ENCODE measurements at regions of chr13 and their contacts with region 1.

Region 1: GRCh38 chr13:98890186-98890585 is 87.7 kb downstream of the DOCK9 start:
- DNase-seq: no peak
- ATAC-seq: peak; percentile 44 to 90 (median 69)
- H3K4me3 ChIP-seq: no peak overlapping the region
- H3K27ac ChIP-seq: no peak overlapping the region
- H3K4me1 ChIP-seq: peaks cover 0 to 49% (median 22%) of the 10 kb centered on the region in 9 donors
- H3K27me3 ChIP-seq: no peaks in the 10 kb centered on the region
- CTCF ChIP-seq: no peak

Region 2: GRCh38 chr13:98977568-98978265 is 87.5 kb after region 1 on chr13 and contains the start of gene DOCK9:
- intact Hi-C with region 1: loop called in 1 of 10 experiments (anchors 10 kb)
- DNase-seq: peak; percentile 73 to 77
- ATAC-seq: peak; percentile 87 to 97 (median 93)
- H3K4me3 ChIP-seq: peak within 1 kb of the TSS; percentile 39 to 68 (median 58)
- H3K27ac ChIP-seq: peak within 1 kb of the TSS; percentile 41 to 88 (median 72)
- H3K4me1 ChIP-seq: peaks cover 0 to 71% (median 33%) of the 10 kb centered on the region in 9 donors
- H3K27me3 ChIP-seq: no peaks in the 10 kb centered on the region
- CTCF ChIP-seq: peak in 2 of 9 donors; percentile 19 to 20
- total RNA-seq, gene DOCK9: 31.6 to 73.7 (median 43.4) TPM